ENCODE measurements at regions of chr14 and their contacts with region 1.

Region 1: DNA sequence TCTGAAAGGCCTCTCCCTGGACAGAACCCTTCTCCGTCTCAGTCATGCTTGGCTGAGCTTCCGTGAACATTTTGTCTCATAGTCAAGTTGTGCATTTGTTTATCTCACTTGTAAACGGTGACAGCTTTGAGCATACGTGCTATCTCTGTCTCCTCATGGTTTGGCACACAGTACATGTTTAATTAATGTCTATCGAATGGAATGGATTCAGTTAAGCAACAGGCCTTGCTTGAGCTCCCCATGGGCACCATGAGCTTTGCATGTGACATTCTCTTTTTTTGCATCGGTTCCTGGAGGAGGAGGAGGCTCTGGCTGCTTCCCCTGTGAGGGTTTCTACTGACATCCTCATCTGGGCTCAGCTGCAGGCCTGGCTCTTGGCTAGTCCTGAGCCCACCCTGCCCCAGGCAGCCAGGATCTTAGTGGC is 80.0 kb downstream of the PRIMA1 start:
- DNase-seq: no peak
- ATAC-seq: peak in 4 of 8 donors; percentile 28 to 94 (median 78)
- H3K4me3 ChIP-seq: no peak overlapping the region
- H3K27ac ChIP-seq: no peak overlapping the region
- H3K4me1 ChIP-seq: no peaks in the 10 kb centered on the region
- H3K27me3 ChIP-seq: peaks cover 0 to 4% (median 0%) of the 10 kb centered on the region in 7 donors
- CTCF ChIP-seq: no peak

Region 2: GRCh38 chr14:93720981-93721483 is 12.7 kb after region 1 on chr14:
- intact Hi-C with region 1: no loop called
- DNase-seq: no peak
- ATAC-seq: peak in 2 of 8 donors; percentile 12
- H3K4me3 ChIP-seq: no peak overlapping the region
- H3K27ac ChIP-seq: no peak overlapping the region
- H3K4me1 ChIP-seq: no peaks in the 10 kb centered on the region
- H3K27me3 ChIP-seq: no peaks in the 10 kb centered on the region
- CTCF ChIP-seq: no peak

Region 3: DNA sequence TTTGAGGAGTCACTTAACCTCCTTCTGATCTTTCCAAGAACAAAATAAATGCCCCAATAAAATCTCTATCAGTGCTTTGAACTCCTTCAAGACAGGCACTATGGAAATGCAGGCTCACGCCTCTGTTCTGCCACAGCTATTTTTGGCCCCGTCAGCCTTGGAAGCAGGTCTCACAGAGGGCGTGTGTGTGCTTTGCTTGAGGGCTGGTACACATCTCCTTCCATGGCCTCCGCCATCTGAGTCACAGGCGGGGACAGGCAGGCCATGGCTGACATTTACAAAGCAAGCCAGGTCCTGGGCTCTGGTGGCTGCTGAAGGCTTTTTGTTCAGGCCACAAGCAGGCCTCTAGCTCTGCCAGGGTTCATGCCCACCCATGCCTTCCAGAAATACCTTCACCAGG is 63.9 kb after region 1 on chr14:
- intact Hi-C with region 1: loop called in 1 of 10 experiments (anchors 10 kb)
- DNase-seq: peak in 1 of 2 donors; percentile 25
- ATAC-seq: peak in 7 of 8 donors; percentile 45 to 91 (median 86)
- H3K4me3 ChIP-seq: no peak overlapping the region
- H3K27ac ChIP-seq: peak overlapping the region in 7 of 10 donors; percentile 36 to 58 (median 46)
- H3K4me1 ChIP-seq: peaks cover 0 to 13% (median 0%) of the 10 kb centered on the region in 9 donors
- H3K27me3 ChIP-seq: no peaks in the 10 kb centered on the region
- CTCF ChIP-seq: no peak